Vagina (tissue), 2 donors: ENCODE measurements at regions of chr2 and their contacts with region 1.

Region 1: GRCh38 chr2:246489-247144 is 17.2 kb downstream of the SH3YL1 start:
- DNase-seq: no peak
- H3K4me3 ChIP-seq: no peak overlapping the region
- H3K27ac ChIP-seq: no peak overlapping the region
- H3K4me1 ChIP-seq: no peaks in the 10 kb centered on the region
- H3K27me3 ChIP-seq: no peaks in the 10 kb centered on the region
- CTCF ChIP-seq: peak in 1 of 3 experiments; percentile 34
- POLR2A ChIP-seq: no peak

Region 2: GRCh38 chr2:46471-47345 is 199.9 kb before region 1 on chr2 and contains the start of gene FAM110C:
- intact Hi-C with region 1: no loop called
- DNase-seq: no peak
- H3K4me3 ChIP-seq: peak within 1 kb of the TSS; percentile 55 to 58
- H3K27ac ChIP-seq: peak within 1 kb of the TSS; percentile 82
- H3K4me1 ChIP-seq: peaks cover 9% of the 10 kb centered on the region
- H3K27me3 ChIP-seq: no peaks in the 10 kb centered on the region
- CTCF ChIP-seq: no peak
- POLR2A ChIP-seq: no peak
- total RNA-seq, gene FAM110C: 27.3 TPM

Region 3: DNA sequence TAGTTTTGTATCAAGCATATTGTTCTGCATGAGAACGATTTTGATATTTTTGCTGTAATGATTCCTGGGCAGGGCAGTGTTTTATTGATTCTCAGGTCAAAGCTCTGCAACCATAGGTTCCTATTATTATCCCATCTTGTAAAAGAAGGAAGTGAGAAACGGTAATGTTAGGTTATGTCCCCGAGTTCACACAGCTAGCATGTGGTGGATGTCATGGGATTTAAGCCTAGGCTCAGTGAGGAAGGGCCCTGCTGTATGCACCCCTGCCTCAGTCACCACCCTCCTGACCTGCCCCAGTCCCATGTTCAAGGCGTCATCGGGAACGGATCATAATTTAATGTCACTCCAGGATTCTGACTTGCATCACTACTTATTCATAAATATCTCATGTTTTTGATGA is 28.8 kb after region 1 on chr2:
- intact Hi-C with region 1: no loop called
- DNase-seq: no peak
- H3K4me3 ChIP-seq: no peak overlapping the region
- H3K27ac ChIP-seq: no peak overlapping the region
- H3K4me1 ChIP-seq: no peaks in the 10 kb centered on the region
- H3K27me3 ChIP-seq: no peaks in the 10 kb centered on the region
- CTCF ChIP-seq: no peak
- POLR2A ChIP-seq: no peak

Region 4: GRCh38 chr2:634670-635404 is 388.2 kb after region 1 on chr2:
- intact Hi-C with region 1: loop called (anchors 5 kb)
- DNase-seq: peak; percentile 71 to 93
- H3K4me3 ChIP-seq: no peak overlapping the region
- H3K27ac ChIP-seq: no peak overlapping the region
- H3K4me1 ChIP-seq: peaks cover 10% of the 10 kb centered on the region
- H3K27me3 ChIP-seq: no peaks in the 10 kb centered on the region
- CTCF ChIP-seq: no peak
- POLR2A ChIP-seq: no peak